ENCODE measurements at regions of chr12 and their contacts with region 1.

Region 1: GRCh38 chr12:49232940-49233841 is 31.7 kb upstream of the TUBA1C start:
- DNase-seq: no peak
- H3K4me3 ChIP-seq: no peak overlapping the region
- H3K27ac ChIP-seq: no peak overlapping the region
- H3K4me1 ChIP-seq: no peaks in the 10 kb centered on the region
- H3K27me3 ChIP-seq: no peaks in the 10 kb centered on the region
- CTCF ChIP-seq: no peak

Region 2: GRCh38 chr12:48936379-48936979 is 296.7 kb before region 1 on chr12:
- CTCF ChIA-PET with region 1: no interaction called
- dilution Hi-C with region 1: no loop called
- in situ Hi-C with region 1: no loop called
- intact Hi-C with region 1: no loop called
- DNase-seq: peak; percentile 17
- H3K4me3 ChIP-seq: no peak overlapping the region
- H3K27ac ChIP-seq: no peak overlapping the region
- H3K4me1 ChIP-seq: no peaks in the 10 kb centered on the region
- H3K27me3 ChIP-seq: no peaks in the 10 kb centered on the region
- CTCF ChIP-seq: peak; percentile 93 to 94

Region 3: DNA sequence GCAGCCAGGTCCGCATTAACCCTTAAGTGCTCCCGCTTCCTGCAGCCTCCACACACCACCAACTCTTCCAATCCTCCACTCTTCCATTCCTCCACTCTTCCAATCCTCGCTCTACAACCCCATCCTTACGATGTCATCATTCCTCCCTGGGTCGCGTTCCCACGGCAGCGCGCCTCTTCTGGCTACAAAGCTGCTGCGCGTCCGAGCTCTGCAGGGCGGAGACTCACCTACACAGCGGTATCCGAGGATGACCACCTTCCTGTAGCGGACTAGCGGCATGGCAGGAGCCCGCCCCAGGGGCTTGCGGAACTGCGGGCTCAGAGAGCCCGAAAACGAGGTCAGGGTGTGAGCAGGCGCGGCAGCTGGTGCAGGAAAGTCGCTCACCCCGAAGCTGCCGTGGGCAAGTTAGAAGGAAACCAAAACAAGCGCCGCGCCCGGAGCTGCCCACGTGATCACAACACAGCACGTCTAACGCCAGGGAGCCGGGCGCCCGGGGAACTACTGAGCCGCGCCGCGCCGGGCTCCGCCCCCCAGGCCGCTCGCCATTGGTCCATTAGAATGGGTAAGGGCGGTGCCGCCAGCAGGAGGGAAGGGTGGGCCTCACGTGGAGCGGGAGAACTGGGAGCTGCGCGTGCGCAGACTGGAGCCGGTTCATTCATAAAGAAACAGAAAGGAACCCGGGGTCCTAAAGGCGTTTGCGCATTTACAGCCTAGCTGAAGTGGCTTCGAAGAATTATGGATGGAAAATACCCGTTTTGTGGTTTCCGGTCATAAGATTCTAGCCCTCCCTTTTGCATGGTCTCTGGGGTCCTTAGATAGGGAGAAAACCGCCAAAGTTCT is 163.5 kb before region 1 on chr12 and contains the start of gene RHEBL1:
- CTCF ChIA-PET with region 1: interaction called, 8 read pairs
- dilution Hi-C with region 1: loop called (anchors 10 kb)
- in situ Hi-C with region 1: loop called in 1 of 2 experiments (anchors 10 kb)
- intact Hi-C with region 1: loop called (anchors 1 kb)
- DNase-seq: peak; percentile 98
- H3K4me3 ChIP-seq: peak within 1 kb of the TSS; percentile 64 to 81 (median 72)
- H3K27ac ChIP-seq: peak within 1 kb of the TSS; percentile 45
- H3K4me1 ChIP-seq: peaks cover 12% of the 10 kb centered on the region
- H3K27me3 ChIP-seq: no peaks in the 10 kb centered on the region
- CTCF ChIP-seq: peak in 1 of 2 donors; percentile 30
- total RNA-seq, gene RHEBL1: 1.0 to 2.3 TPM

Region 4: DNA sequence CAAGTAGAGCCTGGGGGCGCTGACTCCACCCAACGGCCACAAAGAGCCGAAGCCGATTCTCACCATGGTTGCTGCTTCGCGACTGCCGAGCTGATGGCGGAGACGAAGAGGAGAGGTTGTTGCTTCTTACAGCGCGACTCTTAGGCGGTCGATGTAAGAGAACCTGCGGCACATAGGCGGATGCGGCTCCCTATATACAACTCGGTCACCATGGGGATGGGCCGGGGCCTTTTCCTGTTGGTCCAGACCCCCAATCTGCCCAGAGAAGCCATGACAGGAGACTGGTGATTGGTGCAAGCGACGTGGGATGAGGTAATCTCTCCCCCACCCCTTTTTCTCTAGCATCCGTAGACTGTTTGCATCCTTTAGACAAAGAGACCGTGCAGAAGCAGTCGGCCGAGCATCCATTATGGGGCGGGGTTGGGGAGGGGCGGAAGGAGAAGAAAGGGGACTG is 44.2 kb before region 1 on chr12 and contains the start of gene TUBA1A:
- CTCF ChIA-PET with region 1: interaction called, 10 read pairs
- dilution Hi-C with region 1: no loop called
- in situ Hi-C with region 1: no loop called
- intact Hi-C with region 1: loop called (anchors 1 kb)
- DNase-seq: peak; percentile 97
- H3K4me3 ChIP-seq: peak within 1 kb of the TSS; percentile 80 to 82 (median 81)
- H3K27ac ChIP-seq: peak within 1 kb of the TSS; percentile 90
- H3K4me1 ChIP-seq: peaks cover 16% of the 10 kb centered on the region
- H3K27me3 ChIP-seq: no peaks in the 10 kb centered on the region
- CTCF ChIP-seq: no peak
- total RNA-seq, gene TUBA1A: 194 to 540 TPM

Region 5: GRCh38 chr12:49264738-49265515 is 31.7 kb after region 1 on chr12 and contains the start of gene TUBA1C:
- CTCF ChIA-PET with region 1: no interaction called
- dilution Hi-C with region 1: loop called (anchors 5 kb)
- in situ Hi-C with region 1: no loop called
- intact Hi-C with region 1: loop called (anchors 2 kb)
- DNase-seq: peak; percentile 95
- H3K4me3 ChIP-seq: peak within 1 kb of the TSS; percentile 75 to 99 (median 89)
- H3K27ac ChIP-seq: peak within 1 kb of the TSS; percentile 94
- H3K4me1 ChIP-seq: peaks cover 46% of the 10 kb centered on the region
- H3K27me3 ChIP-seq: no peaks in the 10 kb centered on the region
- CTCF ChIP-seq: no peak
- total RNA-seq, gene TUBA1C: 455 to 532 TPM

Region 6: GRCh38 chr12:49279706-49280159 is 46.5 kb after region 1 on chr12:
- CTCF ChIA-PET with region 1: interaction called, 20 read pairs
- dilution Hi-C with region 1: loop called (anchors 5 kb)
- in situ Hi-C with region 1: no loop called
- intact Hi-C with region 1: no loop called
- DNase-seq: no peak
- H3K4me3 ChIP-seq: no peak overlapping the region
- H3K27ac ChIP-seq: no peak overlapping the region
- H3K4me1 ChIP-seq: peaks cover 3% of the 10 kb centered on the region
- H3K27me3 ChIP-seq: no peaks in the 10 kb centered on the region
- CTCF ChIP-seq: no peak

Region 7: DNA sequence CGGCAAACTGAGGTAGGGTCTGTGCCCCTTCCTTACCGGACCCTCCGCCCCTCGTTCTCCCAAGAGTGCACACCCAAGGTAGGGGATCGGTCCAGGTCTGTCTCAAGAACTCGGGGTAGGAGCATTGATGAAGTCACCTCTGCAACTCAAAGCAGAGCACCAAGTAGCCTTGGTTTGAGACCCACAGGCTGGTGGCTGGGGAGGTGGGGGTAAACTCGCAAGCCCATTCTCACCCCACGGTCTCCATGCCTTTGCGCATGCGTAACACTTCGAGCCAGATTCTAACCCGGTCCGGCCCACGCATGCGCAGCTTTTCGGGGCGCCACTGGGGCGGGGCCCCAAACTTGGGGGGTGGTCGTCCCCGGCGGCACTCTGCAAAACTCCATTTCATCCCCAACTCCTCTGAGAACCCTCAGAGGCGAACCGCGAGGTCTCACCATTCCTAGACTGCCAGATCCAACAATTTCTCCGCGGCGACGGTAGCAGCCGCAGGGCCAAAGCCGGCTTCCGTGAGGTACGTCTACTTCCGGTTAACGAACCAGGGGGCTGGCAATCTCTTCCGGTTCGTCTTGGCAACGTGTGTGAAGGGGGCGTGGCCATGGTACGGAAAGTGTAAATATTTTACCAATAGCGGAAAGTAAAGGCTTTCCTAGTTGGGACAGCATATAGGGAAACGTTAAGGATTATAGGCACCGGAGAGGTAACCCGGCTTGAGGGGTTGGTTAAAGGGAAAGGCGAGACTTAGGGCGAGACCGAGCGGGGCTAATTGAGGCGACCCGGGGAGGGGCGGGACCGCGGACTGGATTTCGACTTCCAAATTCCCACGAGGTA is 334.6 kb after region 1 on chr12 and contains the start of gene MCRS1:
- CTCF ChIA-PET with region 1: no interaction called
- dilution Hi-C with region 1: no loop called
- in situ Hi-C with region 1: no loop called
- intact Hi-C with region 1: no loop called
- DNase-seq: peak; percentile 83
- H3K4me3 ChIP-seq: peak within 1 kb of the TSS; percentile 78 to 90 (median 83)
- H3K27ac ChIP-seq: peak within 1 kb of the TSS; percentile 80
- H3K4me1 ChIP-seq: peaks cover 10% of the 10 kb centered on the region
- H3K27me3 ChIP-seq: no peaks in the 10 kb centered on the region
- CTCF ChIP-seq: no peak
- total RNA-seq, gene MCRS1: 43.8 to 59.5 TPM